ENCODE measurements at regions of chr7 and their contacts with region 1.

Region 1: DNA sequence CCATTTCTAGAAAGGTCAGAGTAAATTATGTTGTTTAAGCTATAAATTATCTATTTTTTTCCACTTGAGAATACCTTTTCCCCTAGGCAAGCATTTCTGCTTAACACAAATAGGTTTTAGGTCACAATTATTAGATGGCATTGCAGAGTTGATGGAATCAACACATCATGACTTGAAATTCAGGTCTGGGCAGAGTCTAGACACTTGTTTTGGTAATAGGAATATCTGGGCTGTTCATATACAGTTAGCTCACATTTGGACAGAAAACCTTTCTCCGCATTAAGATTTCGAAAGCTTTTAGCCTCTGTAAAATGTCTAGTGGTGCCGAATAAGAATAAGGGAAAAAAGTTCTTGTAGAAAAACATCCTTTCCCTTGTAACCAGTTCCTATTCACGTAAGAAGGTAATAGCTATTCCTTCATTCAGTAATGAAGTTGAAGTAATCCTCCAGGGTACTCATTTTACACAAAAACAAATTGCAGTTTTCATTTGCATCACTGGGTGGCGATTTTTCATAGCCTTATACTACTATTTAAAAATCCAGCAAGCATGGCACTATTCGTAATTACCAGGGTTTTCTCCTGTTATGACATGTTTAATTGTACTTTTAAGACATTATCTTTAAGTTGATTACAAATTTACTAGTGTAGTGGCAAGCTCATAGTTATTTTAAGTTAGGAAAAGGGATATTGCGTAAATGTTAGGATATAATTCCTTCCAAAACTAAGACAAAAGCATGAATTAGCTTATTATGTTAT is 37.0 kb downstream of the RPA3 start:
- DNase-seq: no peak
- ATAC-seq: peak; percentile 79 to 91

Region 2: DNA sequence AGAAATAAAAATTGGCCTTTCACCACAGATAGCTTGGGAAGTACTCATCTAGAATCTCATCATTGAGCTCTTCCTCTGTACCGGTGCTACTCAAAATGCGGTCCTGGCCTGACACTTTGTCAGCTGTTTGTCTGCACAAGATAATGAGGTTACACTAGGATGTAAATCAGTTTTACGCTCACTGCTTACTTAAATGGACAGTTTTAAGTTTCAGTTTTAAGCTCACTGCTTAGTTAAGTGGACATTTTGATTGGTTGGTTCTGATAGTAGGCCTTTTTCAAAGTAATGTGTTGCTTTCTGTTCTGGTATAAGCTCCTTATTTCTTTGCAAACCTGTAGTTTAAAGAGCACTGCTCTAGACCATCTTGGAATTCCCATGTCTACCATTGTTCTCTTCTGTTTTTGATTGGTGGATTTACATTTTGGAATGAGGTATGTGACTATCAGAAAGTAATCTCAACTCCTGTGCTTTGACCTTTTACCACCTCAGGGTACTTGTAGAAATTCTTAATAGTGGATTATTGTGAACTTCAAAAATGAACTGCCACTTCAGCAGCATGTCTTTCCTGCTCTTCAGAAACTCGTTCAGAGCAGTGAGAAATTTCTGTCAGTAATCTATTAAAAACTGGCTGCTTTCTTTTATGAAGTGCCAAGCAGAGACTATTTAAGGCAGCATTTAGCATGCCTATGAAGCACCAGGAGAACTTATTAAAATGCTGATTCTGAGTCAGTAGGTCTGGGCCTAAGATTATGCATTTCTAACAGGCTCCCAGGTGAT is 444.0 kb before region 1 on chr7:
- intact Hi-C with region 1: no loop called
- DNase-seq: no peak
- ATAC-seq: no peak

Region 3: DNA sequence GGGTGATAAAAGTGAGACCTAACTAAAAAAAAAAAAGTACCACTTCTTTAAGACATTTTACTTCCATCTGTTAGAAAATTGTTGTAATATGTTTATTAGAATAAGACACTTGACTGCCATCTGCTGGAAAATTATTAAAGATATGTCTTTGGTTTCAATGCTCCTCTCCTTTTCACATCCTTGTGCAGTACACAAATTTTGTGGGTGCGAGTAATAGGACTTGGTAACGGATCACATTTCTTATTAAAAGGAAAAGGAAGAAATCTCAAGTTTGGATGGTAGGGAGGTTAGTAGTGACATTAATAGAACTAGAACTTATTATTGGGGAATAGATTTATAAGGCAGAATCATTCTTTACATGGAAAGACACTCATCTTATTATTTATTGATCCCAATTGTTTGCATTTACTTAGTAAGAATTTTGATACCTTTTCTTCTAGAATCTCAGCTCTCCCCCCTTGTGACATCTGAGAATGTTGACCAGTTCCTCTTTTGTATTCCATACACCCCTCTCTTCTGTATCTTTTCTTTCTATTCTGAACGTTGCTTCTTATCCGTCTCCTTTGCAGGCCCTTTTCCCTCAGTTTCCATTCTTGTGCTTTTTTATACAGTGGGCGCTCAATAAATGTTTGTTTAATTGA is 80.1 kb after region 1 on chr7:
- intact Hi-C with region 1: loop called (anchors 1 to 5 kb)
- DNase-seq: no peak
- ATAC-seq: peak in 1 of 2 donors; percentile 74

Region 4: DNA sequence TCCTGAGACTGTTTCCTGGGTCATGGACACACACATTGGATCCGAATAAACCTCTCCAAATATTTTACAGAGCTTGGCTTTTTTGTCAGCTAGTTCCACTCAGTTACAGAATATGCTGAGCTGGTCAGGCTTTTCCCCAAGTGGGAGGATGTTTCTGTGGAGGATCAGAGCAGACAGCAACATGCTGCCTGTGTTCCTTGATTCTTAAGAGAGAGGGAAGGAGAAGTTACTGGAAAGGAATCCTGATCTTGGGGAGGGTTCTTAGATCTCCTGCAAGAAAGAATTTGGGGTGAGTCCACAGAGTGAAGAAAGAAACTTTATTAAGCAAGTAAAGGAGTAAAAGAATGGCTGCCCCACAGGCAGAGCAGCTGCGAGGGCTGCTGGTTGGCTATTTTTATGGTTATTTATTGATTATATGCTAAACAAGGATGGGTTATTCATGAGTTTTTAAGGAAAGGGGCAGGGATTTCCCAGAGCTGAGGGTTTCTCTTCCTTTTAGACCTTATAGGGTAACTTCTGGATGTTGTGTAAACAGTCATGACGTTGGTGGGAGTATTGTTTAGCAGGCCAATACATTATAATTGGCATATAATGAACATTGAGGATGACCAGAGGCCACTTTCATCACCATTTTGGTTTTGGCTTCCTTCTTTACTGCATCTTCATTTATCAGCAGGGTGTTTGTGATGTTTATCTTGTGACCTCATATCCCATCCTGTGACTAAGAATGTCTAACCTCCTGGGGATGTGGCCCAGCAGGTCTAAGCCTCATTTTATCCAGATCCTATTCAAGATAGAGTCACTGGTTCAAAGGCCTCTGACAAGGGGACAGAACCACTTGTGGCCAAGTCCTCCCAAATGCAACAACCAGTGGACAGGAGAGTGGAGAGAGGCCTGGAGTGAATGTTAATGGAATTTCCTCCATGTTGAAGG is 114.1 kb after region 1 on chr7:
- intact Hi-C with region 1: no loop called
- DNase-seq: no peak
- ATAC-seq: no peak